Prostate gland (tissue), 2 donors: ENCODE measurements at regions of chr13 and their contacts with region 1.

Region 1: DNA sequence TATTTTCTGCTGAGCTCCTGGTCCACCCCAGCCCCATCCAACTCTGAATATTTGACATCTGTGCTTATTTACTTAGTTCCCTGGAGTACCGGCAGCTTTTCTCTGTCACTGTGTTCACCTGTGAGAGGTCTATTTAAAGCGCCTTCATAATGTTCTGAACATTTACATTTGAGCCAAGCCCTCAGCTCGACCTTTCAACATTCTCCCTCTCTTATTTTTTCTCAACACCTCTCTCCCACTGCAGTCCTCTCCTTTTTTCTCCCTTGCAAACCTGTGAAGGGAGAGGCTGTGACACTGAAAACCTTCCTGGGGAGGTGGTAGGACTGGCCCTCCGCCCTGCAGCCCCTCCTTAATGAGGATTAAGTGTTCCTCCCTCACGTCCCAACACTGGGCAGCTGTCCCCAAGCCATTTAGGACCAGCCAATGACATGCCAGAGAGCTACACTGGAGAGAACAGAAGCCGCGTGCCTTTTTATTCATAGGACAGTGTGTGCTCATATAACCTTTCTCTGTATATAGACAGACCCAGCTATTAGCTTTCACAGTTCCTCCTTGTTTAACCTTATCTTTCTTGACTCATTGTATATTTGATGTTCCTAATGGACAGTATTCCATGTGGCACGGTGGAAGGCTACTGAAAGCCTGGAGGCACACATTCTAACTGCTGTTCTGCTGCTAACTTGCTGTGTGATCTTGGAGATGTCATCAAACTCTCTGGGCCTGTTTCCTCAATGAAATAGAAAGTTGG is 134.8 kb downstream of the NUFIP1 start:
- DNase-seq: peak; percentile 94
- H3K4me3 ChIP-seq: no peak overlapping the region
- H3K27ac ChIP-seq: peak overlapping the region; percentile 81 to 85
- H3K4me1 ChIP-seq: peaks cover 9% of the 10 kb centered on the region
- H3K27me3 ChIP-seq: no peaks in the 10 kb centered on the region
- CTCF ChIP-seq: peak in 1 of 4 experiments; percentile 10
- POLR2A ChIP-seq: no peak

Region 2: GRCh38 chr13:44577236-44578066 is 277.0 kb before region 1 on chr13:
- intact Hi-C with region 1: loop called (anchors 5 kb)
- DNase-seq: peak; percentile 96
- H3K4me3 ChIP-seq: peak overlapping the region; percentile 90 to 97
- H3K27ac ChIP-seq: peak overlapping the region; percentile 98
- H3K4me1 ChIP-seq: peaks cover 5% of the 10 kb centered on the region
- H3K27me3 ChIP-seq: no peaks in the 10 kb centered on the region
- CTCF ChIP-seq: no peak
- POLR2A ChIP-seq: peak; percentile 65

Region 3: GRCh38 chr13:44758630-44759383 is 95.7 kb before region 1 on chr13:
- intact Hi-C with region 1: loop called (anchors 5 kb)
- DNase-seq: peak; percentile 15
- H3K4me3 ChIP-seq: no peak overlapping the region
- H3K27ac ChIP-seq: peak overlapping the region; percentile 85 to 86
- H3K4me1 ChIP-seq: peaks cover 14% of the 10 kb centered on the region
- H3K27me3 ChIP-seq: no peaks in the 10 kb centered on the region
- CTCF ChIP-seq: no peak
- POLR2A ChIP-seq: no peak

Region 4: GRCh38 chr13:44904967-44905366 is 50.5 kb after region 1 on chr13:
- intact Hi-C with region 1: loop called (anchors 10 kb)
- DNase-seq: peak; percentile 50
- H3K4me3 ChIP-seq: no peak overlapping the region
- H3K27ac ChIP-seq: peak overlapping the region; percentile 70 to 72
- H3K4me1 ChIP-seq: peaks cover 20% of the 10 kb centered on the region
- H3K27me3 ChIP-seq: no peaks in the 10 kb centered on the region
- CTCF ChIP-seq: no peak
- POLR2A ChIP-seq: no peak